ENCODE measurements at regions of chr2 and their contacts with region 1.

Region 1: DNA sequence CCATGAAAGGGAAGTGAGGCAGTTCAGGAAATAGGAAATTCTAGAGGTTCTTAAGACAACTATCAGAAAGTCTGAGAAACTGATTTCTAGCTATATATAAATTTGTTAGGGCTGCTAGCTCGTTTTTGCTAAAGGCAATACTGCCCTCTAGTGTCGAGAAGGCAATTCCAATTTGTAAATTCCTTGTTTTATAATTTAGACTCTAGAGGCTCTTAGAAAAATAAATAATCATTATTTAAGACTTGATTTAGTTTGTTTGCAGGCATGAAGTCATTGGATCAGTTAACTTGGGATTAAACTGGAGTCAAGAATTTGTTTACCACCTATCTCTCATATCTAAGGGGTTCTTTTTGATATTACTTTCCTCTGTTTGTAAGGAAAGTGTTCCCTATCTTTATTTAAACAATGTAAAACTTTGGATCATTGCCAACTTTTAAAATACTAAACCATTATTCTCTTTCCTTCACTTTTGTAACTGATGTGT is 66.2 kb downstream of the ACVR2A start:
- DNase-seq: peak; percentile 69
- H3K4me3 Mint-ChIP-seq: no peak overlapping the region
- H3K27ac Mint-ChIP-seq: no peak overlapping the region
- H3K4me1 Mint-ChIP-seq: no peaks in the 10 kb centered on the region
- H3K27me3 Mint-ChIP-seq: no peaks in the 10 kb centered on the region
- CTCF ChIP-seq: peak; percentile 35

Region 2: GRCh38 chr2:146734042-146734820 is 1176.8 kb before region 1 on chr2:
- CTCF ChIA-PET with region 1: interaction called, 14 read pairs
- POLR2A ChIA-PET with region 1: interaction called, 3 read pairs
- intact Hi-C with region 1: loop called (anchors 1 kb)
- DNase-seq: peak; percentile 77
- H3K4me3 Mint-ChIP-seq: no peak overlapping the region
- H3K27ac Mint-ChIP-seq: no peak overlapping the region
- H3K4me1 Mint-ChIP-seq: no peaks in the 10 kb centered on the region
- H3K27me3 Mint-ChIP-seq: no peaks in the 10 kb centered on the region
- CTCF ChIP-seq: peak; percentile 67

Region 3: GRCh38 chr2:147045113-147045512 is 865.9 kb before region 1 on chr2:
- CTCF ChIA-PET with region 1: interaction called, 50 read pairs
- POLR2A ChIA-PET with region 1: interaction called, 3 read pairs
- intact Hi-C with region 1: loop called (anchors 1 kb)
- DNase-seq: peak; percentile 52
- H3K4me3 Mint-ChIP-seq: no peak overlapping the region
- H3K27ac Mint-ChIP-seq: no peak overlapping the region
- H3K4me1 Mint-ChIP-seq: peaks cover 6% of the 10 kb centered on the region
- H3K27me3 Mint-ChIP-seq: no peaks in the 10 kb centered on the region
- CTCF ChIP-seq: peak; percentile 51

Region 4: DNA sequence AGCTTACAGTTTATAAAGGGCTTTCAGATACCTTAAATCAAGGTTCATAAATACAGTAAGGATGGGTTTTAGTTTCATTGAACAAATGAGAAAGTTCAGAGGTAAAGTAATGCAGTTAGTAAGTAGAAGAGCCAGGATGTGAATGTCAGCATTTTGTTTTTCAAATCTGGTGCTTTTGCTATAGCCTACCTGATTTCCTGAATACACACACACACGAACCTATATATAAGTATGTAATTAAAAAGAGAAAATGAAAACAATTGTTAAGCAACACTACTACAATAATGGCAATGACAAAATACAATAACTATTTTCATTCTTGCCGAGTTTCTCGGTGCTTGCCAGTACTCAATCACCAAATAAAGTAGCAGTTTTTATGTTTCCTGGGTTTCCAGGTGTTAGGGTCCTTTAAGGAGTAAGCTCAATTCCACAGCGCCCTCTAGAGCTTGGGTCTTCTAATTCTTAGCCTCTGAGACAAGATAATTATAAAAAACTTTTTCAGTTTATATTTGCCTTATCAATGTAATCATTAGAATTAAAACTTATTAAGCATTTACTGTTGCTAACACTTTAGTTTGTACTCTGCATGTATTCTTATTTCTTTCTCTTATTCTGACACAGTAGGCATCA is 579.1 kb before region 1 on chr2:
- CTCF ChIA-PET with region 1: interaction called, 14 read pairs
- POLR2A ChIA-PET with region 1: no interaction called
- intact Hi-C with region 1: loop called (anchors 5 kb)
- DNase-seq: peak; percentile 70
- H3K4me3 Mint-ChIP-seq: no peak overlapping the region
- H3K27ac Mint-ChIP-seq: no peak overlapping the region
- H3K4me1 Mint-ChIP-seq: no peaks in the 10 kb centered on the region
- H3K27me3 Mint-ChIP-seq: no peaks in the 10 kb centered on the region
- CTCF ChIP-seq: peak; percentile 72

Region 5: GRCh38 chr2:147843864-147844696 is 67.0 kb before region 1 on chr2:
- CTCF ChIA-PET with region 1: interaction called, 4 read pairs
- POLR2A ChIA-PET with region 1: interaction called, 12 read pairs
- intact Hi-C with region 1: loop called (anchors 2 kb)
- DNase-seq: peak; percentile 86
- H3K4me3 Mint-ChIP-seq: peak overlapping the region; percentile 92
- H3K27ac Mint-ChIP-seq: peak overlapping the region; percentile 89
- H3K4me1 Mint-ChIP-seq: peaks cover 18% of the 10 kb centered on the region
- H3K27me3 Mint-ChIP-seq: no peaks in the 10 kb centered on the region
- CTCF ChIP-seq: no peak

Measured in MCF 10A (cell line).